GM13977 (cell line): ENCODE measurements at regions of chr3 and their contacts with region 1.

Region 1: GRCh38 chr3:49339945-49340800 is at the start of gene USP4:
- DNase-seq: peak; percentile 94
- CTCF ChIP-seq: peak; percentile 67

Region 2: DNA sequence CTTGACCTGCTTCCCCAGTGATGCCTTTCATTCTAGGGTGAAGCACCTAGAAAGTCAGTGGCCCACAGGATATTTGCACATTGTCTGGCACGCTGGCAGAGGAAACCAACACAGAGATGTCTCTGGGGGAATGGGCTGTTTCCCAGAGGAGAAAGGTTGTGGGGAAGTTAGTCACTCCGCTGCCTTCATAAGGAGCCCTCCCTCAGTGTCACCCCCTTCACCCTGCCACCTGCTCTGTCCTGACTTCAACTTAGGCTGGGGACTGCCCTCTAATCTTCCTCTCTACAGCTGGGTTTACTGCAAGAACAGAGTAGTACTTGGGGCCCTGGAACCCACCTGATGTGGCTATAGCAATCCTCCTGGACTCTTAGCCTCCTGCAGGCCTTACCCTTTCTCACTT is 163.1 kb before region 1 on chr3:
- in situ Hi-C with region 1: no loop called
- DNase-seq: no peak
- CTCF ChIP-seq: no peak

Region 3: GRCh38 chr3:49283997-49284396 is 56.2 kb before region 1 on chr3:
- in situ Hi-C with region 1: no loop called
- DNase-seq: no peak
- CTCF ChIP-seq: no peak

Region 4: DNA sequence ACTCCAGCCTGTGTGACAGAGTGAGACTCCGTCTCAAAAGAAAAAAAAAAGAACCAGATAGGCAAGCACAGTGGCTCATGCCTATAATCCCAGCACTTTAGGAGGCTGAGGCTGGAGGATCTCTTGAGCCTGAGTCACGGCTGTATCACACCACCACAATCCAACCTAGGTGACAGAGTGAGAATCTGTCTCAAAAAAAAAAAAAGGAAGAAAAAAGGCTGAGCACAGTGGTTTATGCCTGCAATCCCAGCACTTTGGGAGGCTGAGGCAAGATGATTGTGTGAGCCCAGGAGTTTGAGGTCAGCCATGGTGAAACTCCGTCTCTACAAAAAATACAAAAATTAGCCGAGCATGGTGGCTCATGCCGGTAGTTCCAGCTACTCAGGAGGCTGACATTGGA is 94.6 kb after region 1 on chr3:
- in situ Hi-C with region 1: loop called (anchors 10 kb)
- DNase-seq: no peak
- CTCF ChIP-seq: no peak